BJ (cell line): ENCODE measurements at regions of chr7 and their contacts with region 1.

Region 1: DNA sequence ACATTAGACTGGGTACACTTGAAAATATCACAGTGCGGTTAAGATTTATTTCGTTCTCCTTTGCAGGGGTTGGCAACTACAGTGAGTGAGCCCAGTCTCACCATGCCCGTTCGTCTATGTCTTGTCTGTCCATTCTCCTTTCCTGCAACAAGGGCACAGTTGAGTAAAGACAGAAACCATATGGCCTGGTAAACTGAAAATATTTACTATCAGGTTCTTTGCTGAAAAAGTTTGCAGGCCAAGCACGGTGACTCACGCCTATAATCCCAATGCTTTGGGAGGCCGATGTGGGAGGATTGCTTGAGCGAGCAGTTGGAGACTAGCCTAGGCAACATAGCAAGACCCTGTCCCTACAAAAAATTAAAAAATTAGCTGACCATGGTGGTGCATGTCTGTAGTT is 11.4 kb upstream of the KCTD7 start:
- DNase-seq: no peak
- H3K4me3 ChIP-seq: no peak overlapping the region
- H3K27me3 ChIP-seq: no peaks in the 10 kb centered on the region
- CTCF ChIP-seq: no peak

Region 2: GRCh38 chr7:66758950-66759628 is 141.8 kb after region 1 on chr7:
- CTCF ChIA-PET with region 1: no interaction called
- POLR2A ChIA-PET with region 1: interaction called, 15 read pairs
- DNase-seq: no peak
- H3K4me3 ChIP-seq: no peak overlapping the region
- H3K27me3 ChIP-seq: no peaks in the 10 kb centered on the region
- CTCF ChIP-seq: no peak